SK-N-SH (cell line): ENCODE measurements at regions of chr12 and their contacts with region 1.

Region 1: DNA sequence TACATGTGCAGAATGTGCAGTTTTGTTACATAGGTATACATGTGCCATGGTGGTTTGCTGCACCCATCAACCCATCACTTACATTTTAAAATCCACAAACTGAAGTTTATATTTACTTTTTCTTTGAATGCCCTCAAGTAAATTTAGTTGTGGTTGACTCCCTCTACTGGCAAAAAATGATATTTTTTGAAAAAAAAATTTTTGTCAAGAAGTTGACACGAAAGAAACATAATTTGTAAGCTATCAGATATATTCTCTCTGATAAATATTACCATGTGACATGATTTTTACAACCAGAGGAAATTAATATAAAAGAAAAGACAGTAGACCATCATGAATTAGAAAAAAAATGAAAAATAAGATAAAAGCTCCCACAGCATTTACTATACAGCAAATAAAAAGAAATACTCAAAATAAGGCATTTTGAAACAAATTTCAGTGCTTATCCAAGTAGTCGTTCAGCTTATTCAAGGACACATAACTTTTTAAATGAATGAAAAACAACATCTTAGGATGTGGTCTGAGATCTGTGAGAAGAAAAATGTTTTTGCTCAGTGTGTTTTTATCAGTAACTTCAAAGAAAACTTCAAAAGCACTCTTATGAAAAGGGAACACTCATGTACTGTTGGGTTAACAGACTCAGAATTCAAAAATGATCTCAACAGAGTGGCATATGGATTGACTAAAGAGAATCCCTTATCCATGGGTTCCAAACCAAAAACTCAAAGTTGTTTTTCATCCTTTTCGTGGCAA is 30.0 kb upstream of the GRIP1 start:
- DNase-seq: no peak
- H3K4me3 ChIP-seq: no peak overlapping the region; a peak in 1 of 4 replicates
- H3K27ac ChIP-seq: no peak overlapping the region
- H3K4me1 ChIP-seq: no peaks in the 10 kb centered on the region
- H3K27me3 ChIP-seq: no peaks in the 10 kb centered on the region
- CTCF ChIP-seq: peak; percentile 68
- EP300 ChIP-seq: no peak
- RAD21 ChIP-seq: 0 out of 2 replicates have a peak, but pooled peaks have one; percentile 18

Region 2: GRCh38 chr12:66693901-66694675 is 14.8 kb before region 1 on chr12:
- CTCF ChIA-PET with region 1: interaction called, 23 read pairs
- POLR2A ChIA-PET with region 1: no interaction called
- DNase-seq: peak; percentile 15
- H3K4me3 ChIP-seq: no peak overlapping the region
- H3K27ac ChIP-seq: no peak overlapping the region
- H3K4me1 ChIP-seq: no peaks in the 10 kb centered on the region
- H3K27me3 ChIP-seq: peaks cover 14% of the 10 kb centered on the region; the same call in 1 of the 2 replicates
- CTCF ChIP-seq: peak; percentile 75
- EP300 ChIP-seq: no peak
- RAD21 ChIP-seq: peak; percentile 71

Region 3: DNA sequence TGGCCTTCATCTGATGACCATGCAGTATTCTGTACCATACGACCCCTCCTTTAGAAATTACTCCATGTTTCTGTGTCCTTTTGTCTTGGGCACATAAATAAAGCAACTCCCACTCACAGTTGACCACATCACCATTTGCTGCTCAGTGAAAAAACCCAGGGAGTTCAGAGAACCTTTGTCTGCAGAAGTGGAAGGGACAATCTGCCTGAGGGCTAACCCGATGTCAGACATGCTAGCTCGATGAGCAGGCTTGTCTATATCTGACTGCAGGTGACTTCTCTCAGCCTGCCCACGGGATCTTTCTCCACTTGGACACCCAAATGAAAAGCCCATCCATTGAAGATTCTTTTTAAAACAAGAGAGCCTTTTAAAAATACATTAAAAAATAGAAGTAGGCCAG is 15.7 kb after region 1 on chr12:
- CTCF ChIA-PET with region 1: interaction called, 11 read pairs
- POLR2A ChIA-PET with region 1: no interaction called
- DNase-seq: no peak
- H3K4me3 ChIP-seq: no peak overlapping the region
- H3K27ac ChIP-seq: no peak overlapping the region
- H3K4me1 ChIP-seq: no peaks in the 10 kb centered on the region
- H3K27me3 ChIP-seq: no peaks in the 10 kb centered on the region
- CTCF ChIP-seq: no peak
- EP300 ChIP-seq: no peak
- RAD21 ChIP-seq: no peak

Region 4: GRCh38 chr12:66739933-66740648 is 31.2 kb after region 1 on chr12:
- CTCF ChIA-PET with region 1: no interaction called
- POLR2A ChIA-PET with region 1: no interaction called
- DNase-seq: no peak
- H3K4me3 ChIP-seq: no peak overlapping the region
- H3K27ac ChIP-seq: no peak overlapping the region
- H3K4me1 ChIP-seq: no peaks in the 10 kb centered on the region
- H3K27me3 ChIP-seq: no peaks in the 10 kb centered on the region
- CTCF ChIP-seq: no peak
- EP300 ChIP-seq: no peak
- RAD21 ChIP-seq: no peak